Left cardiac atrium (tissue), 4 donors: ENCODE measurements at regions of chr18 and their contacts with region 1.

Region 1: GRCh38 chr18:22703883-22704585 is 229.1 kb upstream of the RBBP8 start:
- DNase-seq: no peak
- ATAC-seq: peak; percentile 77 to 78

Region 2: DNA sequence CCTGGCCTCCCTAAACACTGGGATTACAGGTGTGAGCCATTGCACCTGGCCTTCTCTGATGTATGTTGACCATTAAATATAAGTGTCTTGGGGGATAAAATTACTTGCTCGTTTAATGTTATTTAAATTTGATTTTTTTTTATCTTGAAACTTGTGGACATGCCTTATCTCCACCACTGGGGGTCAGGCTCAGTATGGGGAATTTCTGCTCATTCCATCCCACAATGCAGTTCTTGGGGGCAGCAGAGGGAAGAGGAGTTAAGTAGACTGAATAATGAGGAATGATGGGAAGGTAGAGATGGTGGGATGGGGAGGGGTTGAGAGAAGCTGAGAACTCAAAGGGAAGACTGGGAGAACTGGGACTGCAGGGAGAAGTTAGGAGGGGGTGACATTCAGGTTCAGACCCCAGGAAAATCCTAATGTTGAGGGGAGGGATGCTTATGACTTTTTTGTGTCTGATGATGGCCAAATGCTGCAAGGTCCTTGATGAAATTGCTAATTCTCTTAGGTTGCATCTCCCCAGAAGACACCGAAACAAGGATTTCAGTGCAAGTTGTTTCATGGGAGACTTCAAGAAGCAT is 789.2 kb before region 1 on chr18:
- intact Hi-C with region 1: loop called in 1 of 2 experiments (anchors 10 kb)
- DNase-seq: no peak
- ATAC-seq: peak; percentile 78 to 91

Region 3: GRCh38 chr18:22609642-22610041 is 94.4 kb before region 1 on chr18:
- intact Hi-C with region 1: loop called in 1 of 2 experiments (anchors 10 kb)
- DNase-seq: peak; percentile 85
- ATAC-seq: peak; percentile 28 to 30

Region 4: GRCh38 chr18:23283916-23284430 is 579.9 kb after region 1 on chr18:
- intact Hi-C with region 1: no loop called
- DNase-seq: no peak
- ATAC-seq: no peak